BJ (cell line): ENCODE measurements at regions of chr17 and their contacts with region 1.

Region 1: DNA sequence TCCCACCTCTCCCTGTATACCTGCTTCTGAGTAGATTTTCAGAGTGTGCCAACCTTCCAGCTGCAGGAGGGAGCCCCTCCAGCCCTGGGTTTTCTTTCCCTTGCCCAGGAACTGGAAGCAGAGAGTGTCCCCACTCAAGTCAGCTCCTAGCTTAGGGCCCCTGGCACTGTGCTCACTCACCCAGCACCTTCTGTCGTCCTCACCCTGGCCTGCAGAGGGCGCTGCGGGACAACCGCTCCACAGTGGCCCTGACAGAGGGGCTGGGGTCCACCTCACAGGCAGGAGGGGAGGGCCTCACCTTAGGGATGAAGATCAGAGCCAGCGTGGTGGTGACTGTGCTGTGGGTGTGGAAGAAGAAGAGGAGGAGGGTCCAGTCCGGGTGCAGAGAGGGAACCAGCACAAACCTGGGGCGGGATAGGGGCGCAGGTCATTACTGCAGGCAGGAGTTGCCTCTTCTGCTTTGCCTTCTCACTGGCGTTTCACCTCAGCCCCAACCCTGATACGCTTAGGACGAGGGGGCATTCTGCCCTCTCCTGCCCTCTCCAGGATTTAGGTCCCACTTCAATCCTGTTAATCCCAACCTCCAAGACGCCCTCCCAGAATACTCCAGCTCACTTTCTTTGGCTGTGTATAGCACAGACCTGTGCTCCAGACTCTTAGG is 10.0 kb downstream of the GPR179 start:
- DNase-seq: no peak
- H3K4me3 ChIP-seq: no peak overlapping the region
- H3K27me3 ChIP-seq: peaks cover 19% of the 10 kb centered on the region
- CTCF ChIP-seq: peak; percentile 71

Region 2: GRCh38 chr17:38322091-38322779 is 11.5 kb before region 1 on chr17:
- CTCF ChIA-PET with region 1: interaction called, 52 read pairs
- POLR2A ChIA-PET with region 1: no interaction called
- DNase-seq: no peak
- H3K4me3 ChIP-seq: no peak overlapping the region
- H3K27me3 ChIP-seq: no peaks in the 10 kb centered on the region
- CTCF ChIP-seq: peak; percentile 76

Region 3: GRCh38 chr17:38853292-38854219 is 519.8 kb after region 1 on chr17 and contains the start of gene RPL23:
- CTCF ChIA-PET with region 1: no interaction called
- POLR2A ChIA-PET with region 1: no interaction called
- DNase-seq: peak; percentile 88
- H3K4me3 ChIP-seq: peak within 1 kb of the TSS; percentile 61
- H3K27me3 ChIP-seq: no peaks in the 10 kb centered on the region
- CTCF ChIP-seq: no peak
- polyA plus RNA-seq, gene RPL23: 1,440 and 2,342 TPM in 2 replicates